ENCODE measurements at regions of chr9 and their contacts with region 1.

Region 1: DNA sequence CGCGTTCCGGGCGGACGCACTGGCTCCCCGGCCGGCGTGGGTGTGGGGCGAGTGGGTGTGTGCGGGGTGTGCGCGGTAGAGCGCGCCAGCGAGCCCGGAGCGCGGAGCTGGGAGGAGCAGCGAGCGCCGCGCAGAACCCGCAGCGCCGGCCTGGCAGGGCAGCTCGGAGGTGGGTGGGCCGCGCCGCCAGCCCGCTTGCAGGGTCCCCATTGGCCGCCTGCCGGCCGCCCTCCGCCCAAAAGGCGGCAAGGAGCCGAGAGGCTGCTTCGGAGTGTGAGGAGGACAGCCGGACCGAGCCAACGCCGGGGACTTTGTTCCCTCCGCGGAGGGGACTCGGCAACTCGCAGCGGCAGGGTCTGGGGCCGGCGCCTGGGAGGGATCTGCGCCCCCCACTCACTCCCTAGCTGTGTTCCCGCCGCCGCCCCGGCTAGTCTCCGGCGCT is at the start of gene DAPK1:
- H3K4me3 Mint-ChIP-seq: peak within 1 kb of the TSS; percentile 85
- H3K27ac Mint-ChIP-seq: peak within 1 kb of the TSS; percentile 90
- H3K4me1 Mint-ChIP-seq: peaks cover 46% of the 10 kb centered on the region
- H3K27me3 Mint-ChIP-seq: no peaks in the 10 kb centered on the region

Region 2: DNA sequence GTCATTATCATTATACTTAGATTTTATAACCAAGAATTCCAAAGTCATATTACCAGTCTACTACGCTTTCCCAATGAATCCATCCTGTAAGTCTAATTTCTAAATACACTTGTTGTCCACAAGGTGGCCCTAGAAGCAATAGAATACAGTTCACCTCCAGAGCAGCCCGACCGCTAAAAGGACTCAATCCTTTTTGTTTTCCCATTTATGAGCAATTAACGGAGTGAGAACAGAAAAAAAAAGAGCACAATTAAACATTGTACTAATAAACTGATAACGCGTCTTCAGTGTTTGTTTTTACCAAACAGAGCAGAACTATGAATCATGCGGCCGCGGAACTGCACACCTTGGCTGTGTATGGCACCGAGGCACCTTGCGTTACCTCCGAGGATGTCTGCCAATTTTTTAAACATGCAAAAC is 160.7 kb before region 1 on chr9:
- intact Hi-C with region 1: loop called (anchors 5 kb)
- H3K4me3 Mint-ChIP-seq: peak overlapping the region; percentile 50
- H3K27ac Mint-ChIP-seq: no peak overlapping the region
- H3K4me1 Mint-ChIP-seq: peaks cover 12% of the 10 kb centered on the region
- H3K27me3 Mint-ChIP-seq: peaks cover 31% of the 10 kb centered on the region

Region 3: DNA sequence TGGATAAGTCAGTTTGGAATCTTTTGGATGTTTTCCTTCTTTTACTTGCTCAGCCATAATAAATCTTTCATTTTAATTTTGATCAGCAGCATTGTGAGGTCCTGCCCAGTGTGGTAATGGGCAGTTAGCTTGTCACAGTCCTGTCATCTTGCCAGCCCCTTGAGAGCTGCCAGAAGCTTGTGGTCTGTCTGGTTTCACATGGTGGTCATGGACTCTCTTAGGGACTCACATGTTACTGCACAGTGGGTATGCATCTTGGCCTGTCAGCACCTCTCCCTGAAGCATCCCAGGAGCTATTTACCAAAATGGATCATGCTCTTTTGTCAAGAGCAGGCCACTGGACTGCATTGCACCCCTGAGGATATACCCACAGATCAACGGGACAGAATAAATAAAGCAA is 60.4 kb after region 1 on chr9:
- intact Hi-C with region 1: loop called (anchors 2 kb)
- H3K4me3 Mint-ChIP-seq: no peak overlapping the region
- H3K27ac Mint-ChIP-seq: peak overlapping the region; percentile 88
- H3K4me1 Mint-ChIP-seq: peaks cover 80% of the 10 kb centered on the region
- H3K27me3 Mint-ChIP-seq: no peaks in the 10 kb centered on the region

Region 4: GRCh38 chr9:87613265-87614111 is 115.9 kb after region 1 on chr9:
- intact Hi-C with region 1: loop called (anchors 5 kb)
- H3K4me3 Mint-ChIP-seq: no peak overlapping the region
- H3K27ac Mint-ChIP-seq: peak overlapping the region; percentile 84
- H3K4me1 Mint-ChIP-seq: peaks cover 95% of the 10 kb centered on the region
- H3K27me3 Mint-ChIP-seq: no peaks in the 10 kb centered on the region

Region 5: DNA sequence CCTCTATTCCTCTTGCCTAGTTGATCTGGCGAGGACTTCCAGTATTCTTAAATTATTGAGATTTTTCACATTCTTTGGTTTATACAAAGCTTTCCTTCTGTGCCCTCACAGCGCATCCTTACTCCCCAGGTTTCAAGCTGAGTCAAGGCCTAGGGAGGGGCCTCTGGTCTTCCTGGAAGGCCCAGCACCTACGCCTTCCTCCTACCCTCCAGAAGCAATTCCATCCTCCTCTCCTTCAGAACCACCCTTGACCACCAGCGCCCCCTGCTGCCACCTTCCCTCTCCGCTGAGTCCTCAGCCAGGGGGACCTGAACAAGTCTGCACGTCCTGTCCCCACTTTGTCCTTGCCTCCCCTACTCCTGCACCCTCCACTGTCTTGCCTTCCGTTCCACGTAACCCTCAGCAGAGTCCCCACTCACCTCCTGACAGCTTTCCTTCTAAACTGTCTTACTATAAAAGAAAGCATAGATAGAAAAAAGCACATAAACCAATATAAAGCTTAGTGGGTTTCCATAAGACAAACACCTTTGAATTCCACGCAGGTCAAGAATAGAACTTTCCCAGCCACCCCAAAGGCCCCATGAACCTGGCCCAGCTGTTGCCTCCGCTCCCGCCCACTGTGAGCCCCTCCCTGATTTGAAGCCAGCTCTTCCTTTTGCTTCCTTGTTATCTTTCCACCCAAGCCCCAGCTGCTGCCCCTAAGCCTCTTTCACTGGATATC is 165.3 kb after region 1 on chr9:
- intact Hi-C with region 1: loop called (anchors 5 kb)
- H3K4me3 Mint-ChIP-seq: no peak overlapping the region
- H3K27ac Mint-ChIP-seq: peak overlapping the region; percentile 35
- H3K4me1 Mint-ChIP-seq: peaks cover 38% of the 10 kb centered on the region
- H3K27me3 Mint-ChIP-seq: no peaks in the 10 kb centered on the region

Region 6: DNA sequence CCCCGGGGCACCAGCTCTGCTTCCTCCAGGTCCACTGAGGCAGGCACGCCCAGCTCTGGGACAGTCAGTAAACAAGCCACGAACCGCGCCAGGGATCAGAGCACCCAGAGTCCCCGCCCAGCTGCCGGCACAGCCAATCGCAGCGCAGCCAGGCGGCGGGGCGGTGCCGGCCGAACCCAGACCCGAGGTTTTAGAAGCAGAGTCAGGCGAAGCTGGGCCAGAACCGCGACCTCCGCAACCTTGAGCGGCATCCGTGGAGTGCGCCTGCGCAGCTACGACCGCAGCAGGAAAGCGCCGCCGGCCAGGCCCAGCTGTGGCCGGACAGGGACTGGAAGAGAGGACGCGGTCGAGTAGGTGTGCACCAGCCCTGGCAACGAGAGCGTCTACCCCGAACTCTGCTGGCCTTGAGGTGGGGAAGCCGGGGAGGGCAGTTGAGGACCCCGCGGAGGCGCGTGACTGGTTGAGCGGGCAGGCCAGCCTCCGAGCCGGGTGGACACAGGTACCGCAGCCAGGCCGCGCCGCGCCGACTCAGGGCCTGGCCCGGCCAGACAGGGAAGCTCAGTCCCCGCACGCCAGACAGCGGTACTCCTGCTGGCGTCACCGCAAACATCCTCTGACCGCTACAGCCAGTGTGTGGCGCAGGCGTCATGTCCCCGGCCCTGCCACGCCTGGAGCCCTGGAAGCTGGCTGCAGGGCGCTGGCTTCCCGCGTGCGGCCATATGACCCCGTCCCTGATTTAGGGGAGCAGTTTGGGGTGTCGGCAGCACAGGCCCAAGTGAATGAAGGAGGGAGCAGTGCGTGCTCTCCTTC is 228.5 kb after region 1 on chr9 and contains the start of gene CTSL:
- intact Hi-C with region 1: loop called (anchors 10 kb)
- H3K4me3 Mint-ChIP-seq: peak within 1 kb of the TSS; percentile 97
- H3K27ac Mint-ChIP-seq: peak within 1 kb of the TSS; percentile 99
- H3K4me1 Mint-ChIP-seq: peaks cover 76% of the 10 kb centered on the region
- H3K27me3 Mint-ChIP-seq: peaks cover 12% of the 10 kb centered on the region

Measured in dendritic cell treated with granulocyte-macrophage colony-stimulating factor and Interleukin-4, amounts not matched to agents 40 ng/mL and 50 ng/mL, for 4 days (primary cell).